Activated naive CD4-positive, alpha-beta T cell treated with anti-CD3 and anti-CD28 coated beads for 36 hours (primary cell): ENCODE measurements at regions of chr3 and their contacts with region 1.

Region 1: GRCh38 chr3:16482770-16483531 is 30.5 kb downstream of the RFTN1 start:
- DNase-seq: peak; percentile 62
- H3K4me3 Mint-ChIP-seq: peak overlapping the region; percentile 3
- H3K27ac Mint-ChIP-seq: peak overlapping the region; percentile 74
- H3K4me1 Mint-ChIP-seq: peaks cover 82% of the 10 kb centered on the region
- H3K27me3 Mint-ChIP-seq: no peaks in the 10 kb centered on the region

Region 2: GRCh38 chr3:16060358-16060852 is 422.5 kb before region 1 on chr3:
- CTCF ChIA-PET with region 1: no interaction called
- intact Hi-C with region 1: no loop called
- DNase-seq: no peak
- H3K4me3 Mint-ChIP-seq: no peak overlapping the region
- H3K27ac Mint-ChIP-seq: no peak overlapping the region
- H3K4me1 Mint-ChIP-seq: peaks cover 6% of the 10 kb centered on the region
- H3K27me3 Mint-ChIP-seq: peaks cover 2% of the 10 kb centered on the region

Region 3: DNA sequence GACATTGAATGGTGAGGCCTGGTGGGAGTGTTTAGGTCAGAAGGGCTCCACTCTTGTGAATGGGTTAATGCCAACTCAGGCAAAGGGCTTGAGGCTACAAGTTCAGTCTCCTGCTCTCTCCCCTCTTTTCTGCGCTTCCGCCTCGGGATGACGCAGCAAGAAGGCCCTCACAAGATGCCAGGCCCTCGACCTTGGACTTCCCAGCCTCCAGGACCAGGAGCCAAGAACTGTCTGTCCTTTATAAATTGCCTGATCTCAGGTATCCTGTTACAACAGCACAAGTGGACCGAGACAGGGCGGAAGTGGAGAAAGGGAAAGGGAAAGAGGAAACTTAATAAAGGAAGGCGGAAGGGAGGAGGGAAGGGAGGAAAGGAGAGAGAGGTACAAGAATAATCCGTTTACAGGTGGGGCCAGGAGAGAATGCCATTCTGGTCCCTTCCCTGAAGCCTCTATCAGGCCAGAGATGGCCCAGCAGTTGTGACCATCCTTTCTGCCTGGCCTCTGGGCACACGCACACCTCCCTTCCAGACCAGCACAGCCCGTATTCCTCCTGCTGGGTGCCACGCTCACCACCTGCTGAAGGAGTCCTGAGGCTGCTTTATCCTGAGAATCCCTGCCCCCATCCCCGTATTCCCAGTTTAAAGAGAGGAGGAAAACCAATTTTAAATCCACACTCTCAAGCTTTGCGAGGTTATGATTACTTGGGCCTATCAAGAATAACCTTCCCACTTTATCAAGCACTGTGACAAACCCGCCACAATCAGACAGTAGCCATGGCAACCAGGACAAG is 153.7 kb before region 1 on chr3:
- CTCF ChIA-PET with region 1: no interaction called
- intact Hi-C with region 1: no loop called
- DNase-seq: no peak
- H3K4me3 Mint-ChIP-seq: no peak overlapping the region
- H3K27ac Mint-ChIP-seq: peak overlapping the region; percentile 63
- H3K4me1 Mint-ChIP-seq: peaks cover 25% of the 10 kb centered on the region
- H3K27me3 Mint-ChIP-seq: no peaks in the 10 kb centered on the region

Region 4: GRCh38 chr3:16448639-16449070 is 34.3 kb before region 1 on chr3:
- CTCF ChIA-PET with region 1: no interaction called
- intact Hi-C with region 1: loop called (anchors 2 kb)
- DNase-seq: peak; percentile 78
- H3K4me3 Mint-ChIP-seq: no peak overlapping the region
- H3K27ac Mint-ChIP-seq: peak overlapping the region; percentile 43
- H3K4me1 Mint-ChIP-seq: peaks cover 36% of the 10 kb centered on the region
- H3K27me3 Mint-ChIP-seq: no peaks in the 10 kb centered on the region

Region 5: GRCh38 chr3:16467393-16467792 is 15.6 kb before region 1 on chr3:
- CTCF ChIA-PET with region 1: interaction called, 3 read pairs
- intact Hi-C with region 1: loop called (anchors 1 kb)
- DNase-seq: peak; percentile 84
- H3K4me3 Mint-ChIP-seq: peak overlapping the region; percentile 50
- H3K27ac Mint-ChIP-seq: peak overlapping the region; percentile 79
- H3K4me1 Mint-ChIP-seq: peaks cover 66% of the 10 kb centered on the region
- H3K27me3 Mint-ChIP-seq: no peaks in the 10 kb centered on the region

Region 6: DNA sequence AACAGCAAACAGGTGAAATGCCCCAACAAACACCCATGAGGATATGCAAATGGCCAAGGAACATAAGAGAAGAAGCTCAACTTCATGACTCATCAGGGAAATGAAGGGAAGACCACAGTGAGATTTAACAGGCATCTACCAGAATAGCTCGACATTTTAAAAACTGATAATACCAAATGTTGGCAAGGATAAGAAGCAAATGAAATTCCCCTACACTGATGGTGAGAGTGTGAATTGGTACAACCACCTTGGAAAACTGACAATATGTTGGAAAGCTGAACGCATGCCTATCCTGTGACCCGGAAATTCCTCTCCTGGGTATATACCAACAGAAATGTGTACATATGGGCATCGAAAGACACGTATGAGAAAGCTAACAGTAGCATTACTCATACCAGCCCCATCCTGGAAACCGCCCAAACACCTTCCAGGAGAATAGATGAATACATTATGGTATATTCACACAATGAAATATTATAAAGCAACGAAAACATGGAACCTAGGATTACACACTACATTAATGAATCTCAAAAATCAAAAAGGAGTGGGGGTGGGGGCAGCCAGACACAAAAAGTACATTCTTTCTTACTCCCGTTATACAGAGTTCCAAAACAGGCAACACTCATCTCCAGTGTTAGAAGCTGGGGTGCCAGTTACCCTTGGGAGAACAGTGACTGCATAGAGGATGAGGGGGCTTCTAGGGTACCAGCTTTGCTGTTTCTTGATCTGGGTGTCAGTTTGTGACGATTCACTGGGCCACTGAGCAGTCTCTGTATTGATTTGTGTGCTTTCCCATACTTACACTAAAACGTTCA is 13.7 kb after region 1 on chr3:
- CTCF ChIA-PET with region 1: interaction called, 6 read pairs
- intact Hi-C with region 1: loop called (anchors 1 kb)
- DNase-seq: peak; percentile 60
- H3K4me3 Mint-ChIP-seq: peak overlapping the region; percentile 1
- H3K27ac Mint-ChIP-seq: peak overlapping the region; percentile 46
- H3K4me1 Mint-ChIP-seq: peaks cover 56% of the 10 kb centered on the region
- H3K27me3 Mint-ChIP-seq: no peaks in the 10 kb centered on the region